ENCODE measurements at regions of chr15 and their contacts with region 1.

Region 1: DNA sequence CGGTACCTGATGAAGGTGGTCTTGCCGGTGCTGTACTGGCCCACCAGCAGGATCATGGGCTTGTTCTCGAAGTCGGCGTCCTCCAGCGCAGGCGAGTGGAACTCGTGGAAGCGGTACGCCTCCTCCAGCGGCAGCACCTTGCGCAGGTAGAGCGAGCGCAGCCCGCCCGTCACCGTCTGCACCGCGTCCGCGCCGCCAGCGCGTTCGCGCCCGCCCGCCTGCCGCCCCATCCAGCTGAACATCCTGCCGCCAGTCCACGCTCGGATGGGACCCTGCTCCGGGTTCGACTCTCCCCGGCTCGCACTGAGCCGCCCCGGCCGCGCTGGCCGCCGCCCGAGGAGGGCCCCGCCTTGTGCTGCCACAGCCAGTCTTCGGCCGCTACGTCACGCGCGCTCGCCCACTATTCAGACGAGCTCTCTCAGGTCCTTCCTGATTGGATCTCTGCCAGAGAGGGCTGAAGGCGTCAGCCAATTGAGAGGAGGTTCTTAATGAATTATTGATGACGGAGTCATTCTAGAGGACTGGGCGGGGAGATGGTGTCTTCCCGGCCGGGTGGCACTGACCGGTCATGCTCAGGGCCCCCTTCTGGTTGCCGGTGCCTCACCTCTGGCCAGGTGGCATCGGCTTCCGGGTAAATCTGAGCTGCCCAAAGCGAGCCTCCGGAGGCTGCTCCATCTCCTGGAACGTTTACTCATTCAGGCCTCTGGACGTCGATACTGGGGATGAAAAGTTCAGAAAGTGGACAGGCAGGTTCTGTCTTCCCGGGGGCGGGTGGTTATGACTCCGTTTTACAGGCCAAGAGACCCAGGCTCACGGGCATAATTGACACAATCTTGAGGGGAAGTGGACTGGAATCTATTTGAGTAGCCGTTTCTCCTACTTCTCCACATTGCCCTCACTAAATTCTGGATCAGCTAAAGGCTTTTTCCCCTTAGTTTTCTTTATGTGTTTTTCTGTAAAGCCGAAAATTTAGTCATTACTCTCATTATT is at the start of gene EHD4:
- DNase-seq: peak; percentile 89
- H3K4me3 Mint-ChIP-seq: peak within 1 kb of the TSS; percentile 68
- H3K27ac Mint-ChIP-seq: peak within 1 kb of the TSS; percentile 87
- H3K4me1 Mint-ChIP-seq: peaks cover 19% of the 10 kb centered on the region
- H3K27me3 Mint-ChIP-seq: no peaks in the 10 kb centered on the region
- CTCF ChIP-seq: no peak
- total RNA-seq, gene EHD4: 20.2 and 20.7 TPM in 2 replicates

Region 2: GRCh38 chr15:41928637-41929620 is 43.6 kb before region 1 on chr15:
- CTCF ChIA-PET with region 1: no interaction called
- intact Hi-C with region 1: loop called (anchors 5 kb)
- DNase-seq: no peak
- H3K4me3 Mint-ChIP-seq: no peak overlapping the region
- H3K27ac Mint-ChIP-seq: no peak overlapping the region
- H3K4me1 Mint-ChIP-seq: peaks cover 28% of the 10 kb centered on the region
- H3K27me3 Mint-ChIP-seq: no peaks in the 10 kb centered on the region
- CTCF ChIP-seq: no peak